PC-9 (cell line): ENCODE measurements at regions of chr13 and their contacts with region 1.

Region 1: DNA sequence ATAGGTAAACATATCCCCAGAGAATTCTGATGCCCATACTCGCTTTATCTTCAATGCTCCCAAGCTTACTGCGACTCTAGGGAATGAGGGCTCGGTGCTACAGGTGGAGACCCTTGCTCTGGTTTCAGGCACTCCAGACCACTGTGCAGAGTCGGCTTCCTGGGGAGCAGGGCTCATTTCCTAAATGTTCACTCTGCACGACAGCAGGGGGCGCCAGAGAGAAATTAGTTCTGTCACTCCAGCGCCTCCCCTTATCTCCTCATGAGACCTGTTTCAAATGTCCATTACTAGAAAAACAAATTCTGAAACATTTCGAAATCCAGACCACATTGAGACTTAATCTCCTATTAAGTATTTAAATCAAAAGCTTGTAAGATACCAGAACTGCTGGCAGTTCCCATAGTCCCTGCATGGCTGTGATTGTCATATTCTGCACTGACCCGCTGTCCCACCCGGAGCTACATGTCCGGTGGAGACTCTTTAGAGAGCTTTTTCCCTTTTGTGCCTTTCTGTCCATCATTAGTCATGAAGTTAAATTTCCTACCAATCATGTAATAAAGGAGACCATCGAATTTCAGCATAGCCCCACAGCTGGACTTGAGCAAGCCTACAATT is 22.4 kb downstream of the EPSTI1 start:
- DNase-seq: peak in 1 of 2 experiments; percentile 57
- H3K4me3 ChIP-seq: no peak overlapping the region
- H3K27ac ChIP-seq: no peak overlapping the region
- H3K4me1 ChIP-seq: no peaks in the 10 kb centered on the region
- H3K27me3 ChIP-seq: no peaks in the 10 kb centered on the region
- CTCF ChIP-seq: peak; percentile 75

Region 2: DNA sequence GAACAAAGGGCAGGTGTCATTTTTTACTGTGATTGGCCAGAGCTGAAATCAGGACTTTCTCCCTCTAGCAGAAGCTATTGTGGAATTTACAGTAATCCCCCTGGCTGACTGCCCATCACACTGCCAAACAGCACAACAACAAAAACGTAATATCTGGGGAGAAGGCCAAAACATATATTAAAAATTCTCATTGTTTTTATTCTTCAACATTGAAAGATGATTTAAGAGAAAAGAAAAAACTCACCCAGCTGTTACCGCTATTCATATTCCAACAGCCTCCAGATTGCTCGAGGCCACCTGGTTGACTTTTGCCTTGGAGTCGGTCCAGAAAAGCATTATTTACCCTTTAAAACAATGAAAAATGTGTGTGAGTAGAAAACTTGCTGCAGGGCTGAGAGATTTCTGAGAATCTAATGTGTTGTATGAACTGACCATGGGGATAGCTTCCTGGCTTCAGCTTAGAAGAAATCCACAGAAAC is 74.9 kb before region 1 on chr13:
- CTCF ChIA-PET with region 1: no interaction called
- POLR2A ChIA-PET with region 1: no interaction called
- intact Hi-C with region 1: loop called (anchors 5 kb)
- DNase-seq: peak; percentile 38 to 49
- H3K4me3 ChIP-seq: no peak overlapping the region
- H3K27ac ChIP-seq: no peak overlapping the region
- H3K4me1 ChIP-seq: peaks cover 5% of the 10 kb centered on the region; the same call in 1 of the 2 replicates
- H3K27me3 ChIP-seq: no peaks in the 10 kb centered on the region
- CTCF ChIP-seq: no peak

Region 3: DNA sequence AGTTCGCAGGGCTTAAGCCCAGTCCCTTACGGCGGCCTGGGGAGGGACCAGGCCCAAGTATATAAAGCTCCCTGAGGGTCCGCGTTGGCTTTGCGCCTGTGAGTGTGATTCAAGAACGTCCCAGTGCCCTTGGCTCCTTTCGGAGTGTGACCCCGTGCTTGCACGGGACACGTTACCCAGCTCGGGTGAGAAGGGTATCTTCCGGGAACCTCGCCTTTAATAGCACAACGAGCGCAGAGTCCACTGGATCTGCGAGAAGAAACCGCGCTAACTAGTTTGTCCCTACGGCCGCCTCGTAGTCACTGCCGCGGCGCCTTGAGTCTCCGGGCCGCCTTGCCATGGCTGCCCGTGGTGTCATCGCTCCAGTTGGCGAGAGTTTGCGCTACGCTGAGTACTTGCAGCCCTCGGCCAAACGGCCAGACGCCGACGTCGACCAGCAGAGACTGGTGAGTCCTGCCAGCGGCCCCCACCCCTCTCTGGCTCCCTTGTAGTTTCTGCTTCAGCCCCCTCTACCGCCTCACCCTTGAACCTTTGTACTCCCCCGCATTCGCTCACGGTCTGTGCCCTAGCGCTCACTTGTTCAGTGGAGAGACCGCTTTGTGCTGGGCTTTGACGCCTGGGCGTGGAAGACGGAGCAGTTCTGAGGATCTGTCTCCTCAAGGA is 53.8 kb after region 1 on chr13 and contains the start of gene DNAJC15:
- CTCF ChIA-PET with region 1: no interaction called
- POLR2A ChIA-PET with region 1: no interaction called
- intact Hi-C with region 1: loop called (anchors 5 kb)
- DNase-seq: peak; percentile 62
- H3K4me3 ChIP-seq: peak within 1 kb of the TSS; percentile 92
- H3K27ac ChIP-seq: peak within 1 kb of the TSS; percentile 72
- H3K4me1 ChIP-seq: 0 out of 2 replicates have a peak, but pooled peaks cover 4% of the 10 kb centered on the region
- H3K27me3 ChIP-seq: no peaks in the 10 kb centered on the region
- CTCF ChIP-seq: no peak; the same call in 1 of the 2 replicates
- total RNA-seq, gene DNAJC15: 12.7 and 14.8 TPM in 2 replicates

Region 4: DNA sequence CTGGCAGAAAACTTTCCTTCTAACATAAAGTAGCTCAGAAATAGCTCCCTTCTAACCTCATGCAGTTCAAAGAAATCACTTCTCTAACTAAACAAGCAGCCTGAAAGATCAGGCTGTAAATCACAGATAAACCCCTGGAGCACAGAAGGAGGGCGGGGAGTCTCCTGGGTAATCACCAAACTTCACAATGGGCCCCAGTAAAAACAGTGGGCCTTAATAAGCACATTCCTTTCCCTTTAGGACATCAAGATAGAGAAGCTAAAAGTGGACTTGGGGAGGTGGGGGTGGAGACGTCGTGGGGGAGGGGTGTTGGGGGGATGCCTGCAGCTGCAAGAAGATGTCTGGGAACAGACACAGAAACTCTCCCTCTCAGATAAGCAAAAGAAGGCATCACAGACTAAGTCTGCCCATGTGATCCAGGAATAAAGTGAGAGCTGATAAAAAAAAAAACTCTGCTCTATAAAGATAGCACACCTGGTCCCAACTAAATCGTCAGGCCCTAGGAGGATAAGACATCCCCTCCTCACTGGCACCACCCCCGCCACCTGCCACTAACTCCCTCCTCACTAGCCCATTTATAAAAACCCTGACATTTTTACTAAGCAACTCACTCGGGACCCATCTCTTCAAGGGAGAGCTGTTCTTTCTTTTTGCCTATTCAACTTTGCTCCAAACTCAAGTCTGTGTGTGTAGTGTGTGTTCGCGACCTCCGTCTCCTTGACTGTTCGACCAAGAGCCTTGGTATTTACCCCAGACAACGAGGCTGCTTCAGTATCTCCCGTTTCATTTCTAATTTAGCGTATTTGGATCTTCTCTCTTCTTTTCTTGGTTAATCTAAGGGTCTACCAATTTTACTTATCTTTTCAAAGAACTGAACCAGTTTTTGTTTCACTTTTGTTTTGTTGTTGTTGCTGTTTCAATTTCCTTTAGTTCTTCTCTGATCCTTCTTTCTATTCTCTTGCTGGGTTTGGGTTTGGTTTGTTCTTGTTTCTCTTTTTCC is 85.4 kb after region 1 on chr13:
- CTCF ChIA-PET with region 1: interaction called, 4 read pairs
- POLR2A ChIA-PET with region 1: no interaction called
- intact Hi-C with region 1: loop called (anchors 2 kb)
- DNase-seq: peak; percentile 27 to 58
- H3K4me3 ChIP-seq: peak overlapping the region; percentile 30; the same call in 1 of the 2 replicates
- H3K27ac ChIP-seq: peak overlapping the region; percentile 77
- H3K4me1 ChIP-seq: peaks cover 55% of the 10 kb centered on the region
- H3K27me3 ChIP-seq: no peaks in the 10 kb centered on the region
- CTCF ChIP-seq: no peak

Region 5: DNA sequence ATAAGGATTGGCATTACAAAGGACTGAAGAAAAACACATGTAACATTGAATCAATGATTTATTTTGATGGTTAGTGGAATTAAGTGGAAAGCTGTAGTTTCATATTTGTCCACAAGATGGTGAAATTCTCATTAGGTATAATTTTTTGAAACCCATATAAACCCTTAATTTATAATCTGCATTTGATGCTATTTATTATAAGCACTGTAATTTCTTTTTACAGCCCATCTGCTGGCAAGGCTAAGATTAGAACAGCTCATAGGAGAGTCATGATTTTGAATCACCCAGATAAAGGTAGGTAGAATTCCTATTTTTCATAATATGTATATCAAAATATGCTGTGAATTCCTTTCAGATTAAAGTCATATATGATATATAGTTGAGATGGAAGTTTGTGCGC is 115.9 kb after region 1 on chr13:
- CTCF ChIA-PET with region 1: no interaction called
- POLR2A ChIA-PET with region 1: no interaction called
- intact Hi-C with region 1: loop called (anchors 1 kb)
- DNase-seq: no peak
- H3K4me3 ChIP-seq: no peak overlapping the region
- H3K27ac ChIP-seq: no peak overlapping the region
- H3K4me1 ChIP-seq: no peaks in the 10 kb centered on the region
- H3K27me3 ChIP-seq: no peaks in the 10 kb centered on the region
- CTCF ChIP-seq: peak; percentile 75

Region 6: DNA sequence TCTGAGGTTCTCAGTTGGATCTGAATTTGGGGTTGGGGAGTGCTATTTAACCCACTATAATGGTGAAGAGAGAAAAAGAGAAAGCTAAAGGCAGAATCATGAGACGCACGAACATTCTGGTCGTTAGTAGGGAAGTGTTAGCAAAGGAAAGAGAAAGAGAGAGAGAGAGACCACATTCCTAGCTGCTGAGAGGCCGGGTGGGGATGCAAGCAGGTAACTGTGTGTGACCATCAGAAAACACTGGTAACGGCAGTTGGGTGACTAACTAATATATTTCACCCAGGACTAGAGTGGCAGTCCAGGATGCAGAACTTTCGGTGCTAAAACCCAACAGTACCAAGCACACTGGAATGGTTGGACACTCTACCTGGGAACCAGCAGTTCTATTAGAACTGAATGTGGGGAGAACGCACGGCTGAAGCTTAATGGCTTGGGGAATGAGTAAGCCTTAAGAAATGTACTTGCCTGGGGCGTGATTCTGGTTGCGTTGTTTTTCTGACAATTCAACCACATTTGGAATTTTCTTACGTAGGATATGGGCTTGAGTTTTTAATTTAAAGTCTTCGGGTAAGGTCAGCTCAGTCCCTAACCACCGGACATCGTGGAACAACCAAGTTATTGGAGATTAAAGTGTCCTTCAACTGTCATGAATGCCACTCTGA is 183.9 kb after region 1 on chr13:
- CTCF ChIA-PET with region 1: interaction called, 3 read pairs
- POLR2A ChIA-PET with region 1: no interaction called
- intact Hi-C with region 1: loop called (anchors 1 kb)
- DNase-seq: peak; percentile 68 to 78
- H3K4me3 ChIP-seq: peak overlapping the region; percentile 40; the same call in 1 of the 2 replicates
- H3K27ac ChIP-seq: peak overlapping the region; percentile 87
- H3K4me1 ChIP-seq: peaks cover 27% of the 10 kb centered on the region
- H3K27me3 ChIP-seq: no peaks in the 10 kb centered on the region
- CTCF ChIP-seq: no peak

Region 7: GRCh38 chr13:43878892-43879754 is 909.5 kb after region 1 on chr13 and contains the start of gene CCDC122:
- CTCF ChIA-PET with region 1: no interaction called
- POLR2A ChIA-PET with region 1: no interaction called
- intact Hi-C with region 1: loop called (anchors 10 kb)
- DNase-seq: peak; percentile 61 to 74
- H3K4me3 ChIP-seq: peak within 1 kb of the TSS; percentile 59
- H3K27ac ChIP-seq: peak within 1 kb of the TSS; percentile 78
- H3K4me1 ChIP-seq: 0 out of 2 replicates have a peak, but pooled peaks cover 27% of the 10 kb centered on the region
- H3K27me3 ChIP-seq: no peaks in the 10 kb centered on the region
- CTCF ChIP-seq: no peak
- total RNA-seq, gene CCDC122: 7.4 and 7.9 TPM in 2 replicates